ENCODE measurements at regions of chr13 and their contacts with region 1.

Region 1: DNA sequence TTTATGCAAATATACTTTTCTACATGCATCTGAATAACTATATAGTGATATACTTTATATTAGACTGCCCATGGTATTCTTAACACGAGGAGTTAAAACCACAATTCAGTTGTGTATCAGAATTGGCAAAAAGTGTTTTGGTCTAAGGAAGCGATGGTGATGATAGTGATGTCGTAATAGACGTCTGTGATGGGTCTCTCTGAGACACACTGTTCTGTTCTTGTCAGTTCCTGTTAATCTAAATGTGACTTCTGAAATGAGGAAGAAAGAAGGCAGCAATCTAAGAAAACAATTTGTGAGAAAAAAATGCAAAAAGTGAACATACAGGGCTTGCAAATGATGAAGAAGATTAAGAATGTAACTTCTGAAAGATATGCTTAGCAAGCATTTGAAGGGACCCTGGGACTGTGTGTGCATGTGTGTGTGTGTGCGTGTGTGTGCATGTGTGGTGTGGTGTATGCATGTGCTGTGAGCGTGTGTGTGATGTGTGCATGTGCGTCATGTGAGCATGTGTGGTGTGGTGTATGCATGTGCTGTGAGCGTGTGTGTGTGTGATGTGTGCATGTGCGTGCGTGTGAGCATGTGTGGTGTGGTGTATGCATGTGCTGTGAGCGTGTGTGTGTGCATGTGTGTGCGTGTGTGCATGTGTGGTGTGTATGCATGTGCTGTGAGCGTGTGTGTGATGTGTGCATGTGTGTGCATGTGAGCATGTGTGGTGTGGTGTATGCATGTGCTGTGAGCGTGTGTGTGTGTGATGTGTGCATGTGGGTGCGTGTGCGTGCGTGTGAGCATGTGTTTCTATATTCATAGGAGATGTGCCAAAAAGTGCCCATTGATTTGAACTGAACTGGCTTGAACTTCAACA is 131.8 kb downstream of the IRS2 start:
- H3K4me3 Mint-ChIP-seq: peak overlapping the region; percentile 48
- H3K27ac Mint-ChIP-seq: peak overlapping the region; percentile 86
- H3K4me1 Mint-ChIP-seq: peaks cover 54% of the 10 kb centered on the region
- H3K27me3 Mint-ChIP-seq: no peaks in the 10 kb centered on the region

Region 2: DNA sequence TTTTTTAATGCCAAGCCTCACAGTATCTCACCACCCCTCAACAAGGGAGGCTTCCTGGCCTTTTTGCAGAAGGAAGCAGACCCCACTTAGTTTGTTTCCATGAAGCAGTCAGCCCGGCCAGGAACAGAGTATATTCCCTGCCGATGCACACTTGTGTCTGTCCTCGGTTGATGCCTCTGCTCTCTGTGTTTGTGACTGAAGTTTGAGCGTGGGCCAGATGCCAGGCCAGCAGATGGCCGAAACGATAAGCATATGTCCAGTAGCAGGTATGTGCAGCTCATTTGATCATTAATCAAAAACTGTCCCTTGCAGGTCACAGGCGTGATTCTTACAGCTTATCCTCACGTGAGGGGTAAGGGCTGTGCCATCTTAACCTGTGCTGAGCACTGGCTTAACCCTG is 12.2 kb before region 1 on chr13:
- intact Hi-C with region 1: loop called (anchors 1 kb)
- H3K4me3 Mint-ChIP-seq: no peak overlapping the region
- H3K27ac Mint-ChIP-seq: no peak overlapping the region
- H3K4me1 Mint-ChIP-seq: peaks cover 11% of the 10 kb centered on the region
- H3K27me3 Mint-ChIP-seq: no peaks in the 10 kb centered on the region

Region 3: DNA sequence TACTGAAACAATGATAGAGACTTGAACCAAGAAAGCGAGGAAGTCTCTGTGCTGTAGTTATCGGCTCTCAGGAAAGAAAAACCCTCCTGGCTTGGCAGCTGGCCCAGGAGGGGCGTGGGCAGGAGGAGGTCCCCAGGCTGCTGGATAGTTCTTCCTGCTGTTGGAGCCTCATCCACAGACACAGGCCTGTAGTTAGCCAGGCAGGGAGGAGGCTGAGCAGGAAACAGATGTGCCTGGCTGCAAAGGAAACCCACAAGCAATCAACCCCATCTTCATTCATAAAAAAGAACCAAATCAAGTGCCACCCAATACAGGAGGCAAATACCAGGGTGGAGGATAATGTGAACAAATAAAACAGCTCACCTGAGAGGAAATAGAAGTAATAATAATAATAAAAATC is 45.6 kb after region 1 on chr13:
- intact Hi-C with region 1: loop called (anchors 5 kb)
- H3K4me3 Mint-ChIP-seq: no peak overlapping the region
- H3K27ac Mint-ChIP-seq: peak overlapping the region; percentile 47
- H3K4me1 Mint-ChIP-seq: peaks cover 52% of the 10 kb centered on the region
- H3K27me3 Mint-ChIP-seq: no peaks in the 10 kb centered on the region

Region 4: GRCh38 chr13:110017379-110017778 is 362.8 kb after region 1 on chr13:
- intact Hi-C with region 1: no loop called
- H3K4me3 Mint-ChIP-seq: no peak overlapping the region
- H3K27ac Mint-ChIP-seq: no peak overlapping the region
- H3K4me1 Mint-ChIP-seq: no peaks in the 10 kb centered on the region
- H3K27me3 Mint-ChIP-seq: no peaks in the 10 kb centered on the region

Region 5: GRCh38 chr13:110138010-110138699 is 483.6 kb after region 1 on chr13:
- intact Hi-C with region 1: loop called (anchors 5 kb)
- H3K4me3 Mint-ChIP-seq: peak overlapping the region; percentile 89
- H3K27ac Mint-ChIP-seq: peak overlapping the region; percentile 91
- H3K4me1 Mint-ChIP-seq: peaks cover 18% of the 10 kb centered on the region
- H3K27me3 Mint-ChIP-seq: peaks cover 3% of the 10 kb centered on the region

Measured in dendritic cell treated with granulocyte-macrophage colony-stimulating factor and Interleukin-4, amounts not matched to agents 40 ng/mL and 50 ng/mL, for 4 days (primary cell).